ENCODE measurements at regions of chr21 and their contacts with region 1.

Region 1: GRCh38 chr21:16330082-16330907 is 600.5 kb downstream of the USP25 start:
- DNase-seq: peak in 1 of 2 donors; percentile 26
- ATAC-seq: peak; percentile 98 to 99
- H3K4me3 ChIP-seq: no peak overlapping the region
- H3K27ac ChIP-seq: peak overlapping the region in 1 of 4 donors; percentile 13
- H3K4me1 ChIP-seq: peaks cover 0 to 11% of the 10 kb centered on the region in 2 donors
- H3K27me3 ChIP-seq: no peaks in the 10 kb centered on the region
- CTCF ChIP-seq: peak; percentile 59 to 79 (median 70)
- POLR2A ChIP-seq: no peak

Region 2: DNA sequence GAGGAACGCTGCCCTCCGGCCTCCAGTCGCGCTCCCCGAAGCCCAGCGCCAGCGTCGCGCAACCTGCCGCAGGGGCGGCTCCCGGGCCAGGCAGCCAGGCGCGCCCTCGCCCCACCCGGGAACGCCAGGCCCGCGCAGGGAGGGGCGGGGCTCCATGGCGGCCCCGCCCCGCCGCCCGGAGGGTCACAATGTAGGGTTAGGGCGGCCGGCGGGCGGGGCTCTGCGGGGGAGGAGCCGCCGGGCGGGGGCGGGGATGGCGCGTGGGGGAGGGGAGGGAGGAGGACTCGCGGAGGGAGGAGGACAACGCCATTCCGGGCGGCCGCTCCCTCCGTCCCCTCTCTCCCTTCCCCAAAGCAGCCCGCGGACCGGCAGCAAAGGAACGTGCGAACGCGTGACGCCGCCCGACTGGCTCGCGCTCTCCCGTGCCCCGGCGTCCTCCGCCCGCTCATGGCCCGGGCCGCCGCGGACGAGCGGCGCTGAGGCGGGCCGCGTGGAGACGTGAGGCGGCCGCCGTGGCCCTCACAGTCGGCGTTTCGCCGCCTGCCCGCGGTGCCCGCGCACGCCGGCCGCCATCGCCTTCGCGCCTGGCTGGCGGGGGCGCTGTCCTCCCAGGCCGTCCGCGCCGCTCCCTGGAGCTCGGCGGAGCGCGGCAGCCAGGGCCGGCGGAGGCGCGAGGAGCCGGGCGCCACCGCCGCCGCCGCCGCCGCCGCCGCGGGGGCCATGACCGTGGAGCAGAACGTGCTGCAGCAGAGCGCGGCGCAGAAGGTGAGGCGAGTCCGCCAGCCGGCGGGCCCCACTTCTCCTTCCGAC is 600.4 kb before region 1 on chr21 and contains the start of gene USP25:
- in situ Hi-C with region 1: no loop called
- intact Hi-C with region 1: no loop called
- DNase-seq: peak; percentile 91 to 93
- ATAC-seq: peak; percentile 86
- H3K4me3 ChIP-seq: peak within 1 kb of the TSS; percentile 60 to 83 (median 78)
- H3K27ac ChIP-seq: peak within 1 kb of the TSS; percentile 92 to 95 (median 94)
- H3K4me1 ChIP-seq: peaks cover 13 to 22% of the 10 kb centered on the region in 2 donors
- H3K27me3 ChIP-seq: no peaks in the 10 kb centered on the region
- CTCF ChIP-seq: peak in 3 of 5 experiments; percentile 16 to 42 (median 28)
- POLR2A ChIP-seq: peak; percentile 87 to 95
- total RNA-seq, gene USP25: 99.4 to 130 (median 107) TPM

Region 3: DNA sequence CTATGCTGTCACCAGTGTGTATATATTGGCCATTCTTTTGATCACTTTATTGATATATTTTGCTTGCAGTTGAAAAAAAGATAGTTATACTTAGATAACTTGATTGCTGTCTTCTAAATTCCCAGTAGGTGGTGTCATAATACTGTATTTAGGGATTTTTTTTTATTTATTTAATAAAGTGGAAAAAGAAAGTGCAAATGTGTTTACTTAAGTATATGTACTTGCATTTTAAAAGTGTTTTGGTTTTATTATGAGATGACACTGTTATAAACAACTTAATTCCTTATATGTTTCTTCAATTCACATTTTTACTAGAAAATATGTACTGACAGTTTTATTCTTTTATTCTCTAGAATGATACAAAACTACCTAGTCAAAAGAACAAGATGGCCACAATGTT is 435.7 kb before region 1 on chr21:
- in situ Hi-C with region 1: loop called in 1 of 4 experiments (anchors 25 kb)
- intact Hi-C with region 1: no loop called
- DNase-seq: no peak
- ATAC-seq: no peak
- H3K4me3 ChIP-seq: no peak overlapping the region
- H3K27ac ChIP-seq: no peak overlapping the region
- H3K4me1 ChIP-seq: peaks cover 4 to 6% of the 10 kb centered on the region in 2 donors
- H3K27me3 ChIP-seq: no peaks in the 10 kb centered on the region
- CTCF ChIP-seq: peak in 2 of 5 experiments; percentile 4 to 18
- POLR2A ChIP-seq: no peak

Region 4: GRCh38 chr21:16145479-16145878 is 184.8 kb before region 1 on chr21:
- in situ Hi-C with region 1: no loop called
- intact Hi-C with region 1: no loop called
- DNase-seq: no peak
- ATAC-seq: no peak
- H3K4me3 ChIP-seq: no peak overlapping the region
- H3K27ac ChIP-seq: no peak overlapping the region
- H3K4me1 ChIP-seq: no peaks in the 10 kb centered on the region
- H3K27me3 ChIP-seq: no peaks in the 10 kb centered on the region
- CTCF ChIP-seq: no peak
- POLR2A ChIP-seq: no peak

Region 5: GRCh38 chr21:16310176-16310575 is 20.1 kb before region 1 on chr21:
- in situ Hi-C with region 1: no loop called
- intact Hi-C with region 1: no loop called
- DNase-seq: no peak
- ATAC-seq: peak in 1 of 2 donors; percentile 18
- H3K4me3 ChIP-seq: peak overlapping the region; percentile 45 to 52 (median 50)
- H3K27ac ChIP-seq: peak overlapping the region in 3 of 4 donors; percentile 80 to 85 (median 85)
- H3K4me1 ChIP-seq: no peaks in the 10 kb centered on the region
- H3K27me3 ChIP-seq: no peaks in the 10 kb centered on the region
- CTCF ChIP-seq: no peak
- POLR2A ChIP-seq: no peak

Measured in gastrocnemius medialis (tissue), 4 donors.